IMR-90 (cell line): ENCODE measurements at regions of chr13 and their contacts with region 1.

Region 1: DNA sequence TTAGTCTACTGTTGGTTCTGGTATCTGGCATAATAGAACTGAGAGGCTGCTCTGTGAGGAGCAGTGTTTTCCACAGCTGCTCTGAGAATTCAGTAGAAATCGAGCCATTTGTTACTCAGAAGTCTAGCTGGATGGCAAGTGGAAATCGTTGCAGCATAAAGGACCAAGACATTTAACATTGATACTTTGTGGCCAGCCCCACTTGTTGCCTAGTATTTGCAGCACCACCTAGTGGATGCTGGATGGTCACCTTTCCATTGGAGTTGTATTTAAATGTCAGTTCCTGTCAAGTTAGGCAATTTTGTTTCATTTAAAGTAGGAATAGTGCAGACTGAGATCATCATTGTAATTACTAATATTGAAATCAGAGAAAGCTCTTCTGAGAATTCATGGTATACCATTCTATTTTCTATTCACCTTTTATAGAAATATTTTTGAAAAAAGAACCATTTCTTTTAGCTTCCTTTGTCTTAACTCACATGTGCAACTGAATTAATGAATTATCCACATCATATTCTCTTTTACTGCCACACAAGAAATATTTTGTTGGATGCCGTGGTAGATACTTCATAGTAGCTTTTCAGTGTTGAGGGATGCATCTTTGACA is 64.6 kb downstream of the PDS5B start:
- DNase-seq: peak; percentile 75
- ATAC-seq: peak; percentile 87
- H3K4me3 ChIP-seq: no peak overlapping the region
- H3K27ac ChIP-seq: no peak overlapping the region
- H3K4me1 ChIP-seq: 0 out of 2 replicates have a peak, but pooled peaks cover 2% of the 10 kb centered on the region
- H3K27me3 ChIP-seq: no peaks in the 10 kb centered on the region
- CTCF ChIP-seq: peak; percentile 68
- POLR2A ChIP-seq: no peak
- RAD21 ChIP-seq: peak; percentile 60

Region 2: DNA sequence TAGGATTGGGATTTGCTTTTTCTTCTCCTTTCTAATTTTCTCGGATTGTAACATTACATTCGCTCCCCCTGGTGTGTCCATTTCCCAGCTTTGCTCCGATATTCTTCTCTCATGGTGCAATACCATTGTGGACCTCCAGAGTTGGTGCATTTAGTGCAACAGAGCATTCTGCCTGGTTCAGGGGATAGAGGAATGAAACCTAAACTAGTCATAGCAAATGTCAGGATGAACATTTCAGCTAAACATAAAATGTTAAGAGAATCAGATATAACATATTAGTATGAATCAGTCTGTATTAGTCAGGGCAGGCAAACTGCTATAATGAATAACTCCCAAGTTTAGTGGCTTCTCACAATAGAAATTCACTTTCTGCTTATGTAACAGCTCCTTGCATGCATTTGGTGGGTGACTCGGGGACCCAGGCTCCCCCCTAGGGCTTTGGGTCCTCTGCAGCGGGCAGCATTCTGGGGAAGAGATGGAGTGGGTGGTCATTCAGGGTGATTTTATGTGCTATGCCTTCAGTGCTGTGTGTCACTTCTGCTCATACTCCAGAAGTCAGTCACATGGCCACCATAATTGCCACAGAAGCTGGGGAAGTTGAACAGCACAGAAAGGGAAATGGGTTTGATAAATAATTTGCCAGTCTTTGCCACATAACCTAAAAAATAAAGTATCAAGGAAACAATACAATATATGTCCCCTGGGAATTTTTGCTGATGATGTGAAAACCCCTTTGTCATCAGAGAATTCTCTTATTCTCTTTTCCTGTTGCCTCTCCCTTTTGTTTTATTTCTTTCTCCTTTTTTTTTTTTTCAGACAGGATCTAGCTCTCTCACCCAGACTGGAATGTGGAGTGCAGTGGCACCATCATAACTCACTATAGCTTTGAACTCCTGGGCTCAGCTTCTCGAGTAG is 1600.1 kb before region 1 on chr13:
- CTCF ChIA-PET with region 1: no interaction called
- POLR2A ChIA-PET with region 1: no interaction called
- dilution Hi-C with region 1: no loop called
- in situ Hi-C with region 1: no loop called
- intact Hi-C with region 1: no loop called
- DNase-seq: peak; percentile 57
- ATAC-seq: no peak
- H3K4me3 ChIP-seq: no peak overlapping the region
- H3K27ac ChIP-seq: no peak overlapping the region
- H3K4me1 ChIP-seq: peaks cover 11% of the 10 kb centered on the region
- H3K27me3 ChIP-seq: no peaks in the 10 kb centered on the region
- CTCF ChIP-seq: peak; percentile 33
- POLR2A ChIP-seq: no peak
- RAD21 ChIP-seq: peak; percentile 36

Region 3: DNA sequence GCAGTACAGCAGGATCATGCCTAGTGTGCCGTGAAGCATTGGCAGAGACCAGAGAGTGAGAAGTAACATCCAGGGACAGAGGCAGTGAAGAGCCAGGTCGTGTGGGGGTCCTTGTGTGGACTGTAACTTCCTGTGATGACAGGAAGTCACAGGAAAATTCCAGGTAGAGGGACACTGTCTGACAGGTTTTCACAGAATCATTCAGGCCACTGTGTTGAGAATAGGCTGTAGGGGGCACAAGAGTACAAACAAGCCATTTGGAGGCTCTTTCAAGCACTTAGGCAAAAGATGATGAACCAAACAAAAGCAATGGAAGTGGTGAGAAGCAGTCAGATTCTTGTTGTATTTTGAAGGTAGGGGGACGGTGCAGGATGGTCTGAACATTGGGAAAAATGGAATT is 269.3 kb before region 1 on chr13:
- CTCF ChIA-PET with region 1: no interaction called
- POLR2A ChIA-PET with region 1: no interaction called
- dilution Hi-C with region 1: no loop called
- in situ Hi-C with region 1: no loop called
- intact Hi-C with region 1: loop called (anchors 5 kb)
- DNase-seq: peak; percentile 37
- ATAC-seq: 0 out of 2 replicates have a peak, but pooled peaks have one; percentile 65
- H3K4me3 ChIP-seq: no peak overlapping the region
- H3K27ac ChIP-seq: no peak overlapping the region
- H3K4me1 ChIP-seq: no peaks in the 10 kb centered on the region
- H3K27me3 ChIP-seq: no peaks in the 10 kb centered on the region
- CTCF ChIP-seq: peak; percentile 56
- POLR2A ChIP-seq: no peak
- RAD21 ChIP-seq: peak; percentile 55

Region 4: GRCh38 chr13:32594157-32594738 is 56.6 kb before region 1 on chr13:
- CTCF ChIA-PET with region 1: interaction called, 3 read pairs
- POLR2A ChIA-PET with region 1: no interaction called
- dilution Hi-C with region 1: no loop called
- in situ Hi-C with region 1: loop called (anchors 5 kb)
- intact Hi-C with region 1: no loop called
- DNase-seq: peak; percentile 54
- ATAC-seq: peak; percentile 55; the same call in 1 of the 2 replicates
- H3K4me3 ChIP-seq: no peak overlapping the region
- H3K27ac ChIP-seq: no peak overlapping the region
- H3K4me1 ChIP-seq: peaks cover 8% of the 10 kb centered on the region
- H3K27me3 ChIP-seq: no peaks in the 10 kb centered on the region
- CTCF ChIP-seq: no peak
- POLR2A ChIP-seq: no peak
- RAD21 ChIP-seq: no peak

Region 5: GRCh38 chr13:32639502-32640105 is 11.2 kb before region 1 on chr13:
- CTCF ChIA-PET with region 1: interaction called, 13 read pairs
- POLR2A ChIA-PET with region 1: interaction called, 4 read pairs
- dilution Hi-C with region 1: no loop called
- in situ Hi-C with region 1: no loop called
- intact Hi-C with region 1: no loop called
- DNase-seq: peak; percentile 77
- ATAC-seq: peak; percentile 93
- H3K4me3 ChIP-seq: no peak overlapping the region
- H3K27ac ChIP-seq: no peak overlapping the region
- H3K4me1 ChIP-seq: no peaks in the 10 kb centered on the region
- H3K27me3 ChIP-seq: no peaks in the 10 kb centered on the region
- CTCF ChIP-seq: peak; percentile 77
- POLR2A ChIP-seq: no peak
- RAD21 ChIP-seq: peak; percentile 72

Region 6: DNA sequence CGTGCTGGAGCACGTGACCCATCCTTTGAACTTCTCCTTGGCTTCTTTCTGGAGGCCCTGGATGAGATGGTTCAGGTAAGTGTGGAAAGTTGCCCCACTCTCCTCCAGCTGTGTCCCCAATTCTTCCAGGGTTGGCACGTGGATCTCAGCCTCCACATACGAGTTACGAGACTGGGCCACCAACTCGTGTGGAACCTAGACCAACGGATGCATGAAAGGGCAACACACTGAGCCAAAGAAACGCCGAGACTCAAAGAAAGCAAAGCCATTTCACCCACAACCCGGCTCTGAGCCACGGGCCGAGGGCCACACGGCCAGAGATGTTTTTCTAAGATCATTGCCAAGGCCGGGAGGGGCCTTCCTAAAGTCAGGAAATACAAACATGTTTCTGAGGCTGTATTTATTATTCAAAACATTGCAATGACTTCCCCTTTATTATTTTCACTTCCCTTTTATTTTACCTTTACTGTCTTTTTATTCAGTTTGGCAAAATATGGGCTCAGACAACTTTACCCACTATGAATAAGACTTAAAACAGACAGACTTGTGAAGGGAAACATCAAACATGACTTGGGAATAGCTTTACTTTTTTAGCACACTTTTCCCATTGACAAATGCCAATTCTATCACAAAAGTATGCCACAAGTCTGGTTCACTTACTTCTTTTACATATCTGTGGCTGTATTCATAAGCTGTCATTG is 460.1 kb after region 1 on chr13:
- CTCF ChIA-PET with region 1: no interaction called
- POLR2A ChIA-PET with region 1: no interaction called
- dilution Hi-C with region 1: no loop called
- in situ Hi-C with region 1: no loop called
- intact Hi-C with region 1: loop called (anchors 5 kb)
- DNase-seq: peak; percentile 56
- ATAC-seq: no peak
- H3K4me3 ChIP-seq: no peak overlapping the region
- H3K27ac ChIP-seq: peak overlapping the region; percentile 59; the same call in 1 of the 2 replicates
- H3K4me1 ChIP-seq: peaks cover 55% of the 10 kb centered on the region
- H3K27me3 ChIP-seq: no peaks in the 10 kb centered on the region
- CTCF ChIP-seq: no peak
- POLR2A ChIP-seq: no peak
- RAD21 ChIP-seq: no peak